ENCODE measurements at regions of chr10 and their contacts with region 1.

Region 1: GRCh38 chr10:77173615-77174461 is 463.8 kb downstream of the KCNMA1 start:
- DNase-seq: peak; percentile 55 to 89 (median 68)
- H3K4me3 ChIP-seq: no peak overlapping the region
- H3K27ac ChIP-seq: peak overlapping the region in 7 of 59 donors; percentile 1 to 66 (median 39)
- H3K27me3 ChIP-seq: no peaks in the 10 kb centered on the region
- CTCF ChIP-seq: peak; percentile 78 to 96 (median 90)

Region 2: GRCh38 chr10:76723844-76724243 is 450.0 kb before region 1 on chr10:
- intact Hi-C with region 1: no loop called
- DNase-seq: no peak
- H3K4me3 ChIP-seq: no peak overlapping the region
- H3K27ac ChIP-seq: no peak overlapping the region
- H3K27me3 ChIP-seq: peaks cover 0 to 20% (median 0%) of the 10 kb centered on the region in 45 donors
- CTCF ChIP-seq: no peak

Region 3: DNA sequence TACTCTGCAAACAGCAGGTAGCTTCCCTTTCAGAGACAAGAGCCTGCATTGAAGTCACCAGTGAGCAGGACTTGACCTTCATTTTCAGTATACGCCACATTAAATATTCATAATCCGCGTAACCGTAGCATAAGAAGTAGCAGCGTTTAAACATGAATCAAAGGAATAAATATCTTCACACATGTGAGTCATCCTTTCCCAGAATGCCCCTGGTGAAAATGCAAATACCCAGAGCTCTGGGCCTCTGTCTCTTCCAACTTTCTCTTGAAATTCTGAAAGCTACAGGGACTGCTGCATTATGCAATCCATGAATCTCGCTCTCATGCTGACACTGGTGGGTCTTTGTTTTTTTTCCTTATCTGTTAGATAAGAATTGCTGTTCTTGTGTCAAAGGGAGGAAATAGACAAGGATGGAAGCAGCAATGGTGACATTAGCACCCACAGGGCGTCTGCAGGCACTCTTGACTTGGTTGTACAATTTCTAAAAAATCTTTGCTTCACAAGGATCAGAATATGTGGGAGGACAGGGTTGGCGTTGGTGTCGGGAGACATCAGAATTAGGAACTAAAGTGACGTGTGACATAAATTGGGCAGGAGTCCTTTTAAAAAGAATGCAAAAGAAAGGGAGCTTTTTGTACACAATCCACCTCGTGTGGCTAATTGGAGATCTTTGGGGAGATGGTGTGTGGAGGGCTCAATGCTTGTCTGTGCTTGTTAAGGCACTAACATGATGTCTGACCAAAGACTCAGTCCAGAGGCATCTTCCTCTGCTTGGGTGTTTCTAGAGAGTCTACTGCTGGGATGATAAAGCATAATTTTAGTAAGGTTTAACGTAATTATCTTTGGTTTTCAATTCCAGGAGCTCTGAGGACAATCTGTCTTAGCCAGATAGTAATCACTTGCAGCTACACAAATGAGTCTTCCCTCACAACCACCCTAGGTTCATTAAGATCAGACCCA is 73.5 kb after region 1 on chr10:
- intact Hi-C with region 1: loop called in 1 of 2 experiments (anchors 10 kb)
- DNase-seq: no peak
- H3K4me3 ChIP-seq: peak overlapping the region in 1 of 59 donors; percentile 1
- H3K27ac ChIP-seq: peak overlapping the region in 51 of 59 donors; percentile 0 to 84 (median 57)
- H3K27me3 ChIP-seq: no peaks in the 10 kb centered on the region
- CTCF ChIP-seq: no peak

Region 4: DNA sequence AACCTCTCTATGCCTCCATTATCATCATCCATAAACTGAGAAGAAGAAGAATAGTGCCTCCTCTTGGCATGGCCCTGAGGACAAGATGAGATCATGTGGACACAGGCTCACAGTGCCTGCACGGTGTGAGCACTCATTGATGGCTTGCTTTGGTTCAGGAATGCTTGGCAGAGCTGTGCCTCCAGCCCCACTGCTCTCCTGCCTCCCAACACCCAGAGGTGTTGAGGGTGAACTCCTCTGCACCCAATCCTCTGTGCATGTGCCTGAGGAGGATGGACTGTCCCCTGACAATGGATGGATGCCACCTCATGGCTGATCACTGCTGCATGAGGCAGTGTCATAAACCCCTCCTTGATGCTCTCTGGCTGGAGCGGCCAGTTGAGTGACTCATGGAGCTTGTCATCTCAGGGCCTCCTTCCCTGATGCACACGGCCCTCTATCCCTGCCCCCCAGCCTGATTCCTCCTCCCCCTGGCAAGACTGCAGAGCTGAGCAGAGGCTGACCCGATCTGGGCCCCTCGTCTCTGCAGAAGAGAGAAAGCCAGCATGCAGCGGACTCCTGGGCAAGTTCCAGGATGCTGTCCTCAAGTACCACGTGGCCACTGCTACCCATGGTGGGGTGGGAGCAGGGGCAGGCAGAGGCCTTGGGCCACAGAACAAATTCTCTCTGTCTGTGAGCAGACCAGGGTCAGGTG is 327.5 kb after region 1 on chr10:
- intact Hi-C with region 1: loop called in 1 of 2 experiments (anchors 10 kb)
- DNase-seq: peak in 7 of 10 donors; percentile 36 to 81 (median 60)
- H3K4me3 ChIP-seq: no peak overlapping the region
- H3K27ac ChIP-seq: peak overlapping the region in 32 of 59 donors; percentile 3 to 74 (median 44)
- H3K27me3 ChIP-seq: no peaks in the 10 kb centered on the region
- CTCF ChIP-seq: no peak

Region 5: DNA sequence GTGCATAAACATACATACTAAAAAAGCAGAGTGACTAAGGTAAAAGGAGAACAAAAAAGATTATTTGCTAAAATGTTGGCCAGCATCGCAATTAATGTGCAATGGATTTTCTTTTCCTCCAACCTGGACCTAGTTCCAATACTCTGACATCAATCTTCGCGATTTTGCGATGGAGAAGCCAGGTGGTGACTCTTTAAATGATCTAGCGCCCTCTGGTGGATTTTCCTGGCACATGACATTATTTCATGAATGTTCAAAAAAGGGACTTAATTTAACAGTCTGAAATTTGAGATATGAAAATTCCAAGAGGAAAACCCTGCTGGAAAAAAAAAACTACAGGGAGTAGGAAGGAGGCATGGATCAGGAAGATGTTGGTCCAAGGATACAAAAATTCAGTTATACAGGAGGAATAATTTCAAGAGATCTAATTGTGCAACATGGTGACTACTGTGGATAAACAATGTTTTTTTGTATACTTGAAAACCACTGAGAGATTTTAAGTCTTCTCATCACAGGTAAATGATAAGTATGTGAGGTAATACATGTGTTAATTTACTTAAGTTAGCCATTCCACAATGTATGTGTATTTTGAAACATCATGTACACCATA is 468.1 kb after region 1 on chr10:
- intact Hi-C with region 1: loop called (anchors 2 kb)
- DNase-seq: peak in 5 of 10 donors; percentile 55 to 84 (median 58)
- H3K4me3 ChIP-seq: peak overlapping the region in 2 of 59 donors; percentile 7 to 23
- H3K27ac ChIP-seq: peak overlapping the region in 2 of 59 donors; percentile 7 to 24
- H3K27me3 ChIP-seq: peaks cover 0 to 27% (median 3%) of the 10 kb centered on the region in 45 donors
- CTCF ChIP-seq: peak; percentile 81 to 99 (median 93)

Region 6: GRCh38 chr10:77710759-77711682 is 537.2 kb after region 1 on chr10:
- intact Hi-C with region 1: loop called (anchors 5 to 10 kb)
- DNase-seq: peak; percentile 56 to 86 (median 74)
- H3K4me3 ChIP-seq: peak overlapping the region; percentile 3 to 70 (median 55)
- H3K27ac ChIP-seq: peak overlapping the region in 2 of 59 donors; percentile 56 to 64
- H3K27me3 ChIP-seq: peaks cover 0 to 20% (median 0%) of the 10 kb centered on the region in 45 donors
- CTCF ChIP-seq: peak; percentile 44 to 97 (median 92)